ENCODE measurements at regions of chr1 and their contacts with region 1.

Region 1: DNA sequence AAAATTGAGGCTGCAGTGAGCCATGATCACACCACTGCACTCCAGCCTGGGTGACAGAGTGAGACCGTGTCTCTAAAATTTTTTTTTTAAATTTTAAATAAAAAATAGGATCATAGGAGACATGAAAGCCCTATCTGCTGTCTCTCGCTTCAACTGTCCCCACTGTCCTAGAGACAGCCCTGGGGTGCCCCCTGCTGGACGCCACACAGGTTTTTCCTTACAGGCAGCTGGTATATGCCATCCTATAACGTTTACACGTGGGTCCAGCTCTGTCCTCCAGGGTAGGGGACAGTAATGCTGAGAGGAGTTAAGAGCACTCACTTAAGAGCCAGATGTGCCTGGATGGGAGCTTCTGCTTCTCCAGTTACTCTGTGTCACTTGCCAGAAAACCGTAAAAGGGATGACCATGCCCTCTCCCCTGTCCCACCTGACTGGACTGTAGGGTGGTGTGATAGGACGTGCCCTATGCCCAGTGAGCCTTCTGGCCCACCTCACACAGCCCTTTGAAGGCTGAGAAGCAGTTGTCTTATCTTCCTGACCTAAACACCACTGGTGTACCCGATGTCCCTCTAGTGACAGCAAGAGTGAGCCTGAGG is 8.5 kb downstream of the FBXO2 start:
- DNase-seq: peak; percentile 63
- H3K4me3 Mint-ChIP-seq: no peak overlapping the region
- H3K27ac Mint-ChIP-seq: no peak overlapping the region
- H3K4me1 Mint-ChIP-seq: peaks cover 9% of the 10 kb centered on the region
- H3K27me3 Mint-ChIP-seq: peaks cover 7% of the 10 kb centered on the region

Region 2: DNA sequence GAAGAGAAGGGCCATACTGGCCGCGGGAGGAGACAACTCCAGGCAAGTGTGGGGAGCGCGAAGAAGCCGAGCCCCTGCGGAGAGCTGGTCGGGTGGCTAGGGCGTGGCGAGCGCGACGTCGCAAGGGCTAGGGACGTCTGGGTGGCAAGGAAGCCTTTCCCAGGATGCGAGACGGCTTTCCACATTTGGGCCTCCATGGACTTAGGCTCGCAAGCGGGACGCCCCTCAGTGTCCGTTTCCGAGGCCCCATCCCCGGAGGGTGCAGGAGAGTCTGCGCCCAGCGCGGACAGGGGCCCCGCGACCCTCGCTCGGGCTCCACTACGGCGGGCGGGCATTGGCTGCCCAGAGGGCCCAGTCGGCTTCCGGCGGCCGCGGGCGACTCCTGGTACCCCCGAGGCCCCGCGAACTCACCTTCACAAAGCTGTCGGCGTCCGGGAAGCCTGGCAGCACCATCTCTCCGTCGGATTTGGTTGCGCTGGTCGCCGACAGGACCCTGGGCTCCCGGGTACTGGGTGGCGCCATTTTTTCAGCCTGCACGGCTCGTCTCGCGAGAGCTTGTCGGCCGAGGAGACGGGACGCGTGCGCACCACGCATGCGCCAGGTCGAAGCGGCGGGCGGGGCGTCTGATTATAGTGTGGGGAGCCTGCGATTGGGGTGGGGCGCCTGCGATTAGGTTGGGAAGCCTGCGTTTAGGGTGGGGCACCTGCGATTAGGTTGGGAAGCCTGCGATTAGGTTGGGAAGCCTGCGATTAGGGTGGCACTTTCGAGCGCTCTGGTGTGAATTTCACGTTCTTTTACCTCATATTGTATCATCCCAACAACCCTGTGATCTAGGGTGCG is 546.2 kb before region 1 on chr1 and contains the start of gene EXOSC10:
- intact Hi-C with region 1: loop called (anchors 1 kb)
- DNase-seq: peak; percentile 96
- H3K4me3 Mint-ChIP-seq: peak within 1 kb of the TSS; percentile 96
- H3K27ac Mint-ChIP-seq: peak within 1 kb of the TSS; percentile 96
- H3K4me1 Mint-ChIP-seq: peaks cover 13% of the 10 kb centered on the region
- H3K27me3 Mint-ChIP-seq: no peaks in the 10 kb centered on the region
- total RNA-seq, gene EXOSC10: 93.5 and 103 TPM in 2 replicates

Region 3: GRCh38 chr1:11320153-11320936 is 325.4 kb before region 1 on chr1:
- intact Hi-C with region 1: loop called (anchors 1 kb)
- DNase-seq: peak; percentile 7
- H3K4me3 Mint-ChIP-seq: no peak overlapping the region
- H3K27ac Mint-ChIP-seq: no peak overlapping the region
- H3K4me1 Mint-ChIP-seq: peaks cover 8% of the 10 kb centered on the region
- H3K27me3 Mint-ChIP-seq: peaks cover 2% of the 10 kb centered on the region

Region 4: GRCh38 chr1:11681071-11681771 is 35.5 kb after region 1 on chr1 and contains the start of gene MAD2L2:
- intact Hi-C with region 1: loop called (anchors 1 kb)
- DNase-seq: peak; percentile 90
- H3K4me3 Mint-ChIP-seq: peak within 1 kb of the TSS; percentile 87
- H3K27ac Mint-ChIP-seq: peak within 1 kb of the TSS; percentile 91
- H3K4me1 Mint-ChIP-seq: peaks cover 18% of the 10 kb centered on the region
- H3K27me3 Mint-ChIP-seq: peaks cover 13% of the 10 kb centered on the region
- total RNA-seq, gene MAD2L2: 76.9 and 81.8 TPM in 2 replicates